HepG2 (cell line): ENCODE measurements at regions of chrX and their contacts with region 1.

Region 1: GRCh38 chrX:41236629-41237028 is 97.3 kb upstream of the DDX3X start:
- DNase-seq: no peak
- ATAC-seq: no peak
- H3K4me3 ChIP-seq: no peak overlapping the region
- H3K27ac ChIP-seq: no peak overlapping the region
- H3K4me1 ChIP-seq: peaks cover 20% of the 10 kb centered on the region
- H3K27me3 ChIP-seq: no peaks in the 10 kb centered on the region
- CTCF ChIP-seq: no peak
- EP300 ChIP-seq: no peak
- POLR2A ChIP-seq: no peak
- RAD21 ChIP-seq: no peak

Region 2: GRCh38 chrX:41180194-41180908 is 56.3 kb before region 1 on chrX:
- CTCF ChIA-PET with region 1: no interaction called
- POLR2A ChIA-PET with region 1: no interaction called
- in situ Hi-C with region 1: no loop called
- intact Hi-C with region 1: loop called (anchors 10 kb)
- DNase-seq: peak; percentile 39
- ATAC-seq: peak; percentile 57; the same call in 2 of the 3 replicates
- H3K4me3 ChIP-seq: no peak overlapping the region
- H3K27ac ChIP-seq: no peak overlapping the region
- H3K4me1 ChIP-seq: no peaks in the 10 kb centered on the region
- H3K27me3 ChIP-seq: no peaks in the 10 kb centered on the region
- CTCF ChIP-seq: peak; percentile 60
- EP300 ChIP-seq: no peak
- POLR2A ChIP-seq: no peak
- RAD21 ChIP-seq: no peak

Region 3: DNA sequence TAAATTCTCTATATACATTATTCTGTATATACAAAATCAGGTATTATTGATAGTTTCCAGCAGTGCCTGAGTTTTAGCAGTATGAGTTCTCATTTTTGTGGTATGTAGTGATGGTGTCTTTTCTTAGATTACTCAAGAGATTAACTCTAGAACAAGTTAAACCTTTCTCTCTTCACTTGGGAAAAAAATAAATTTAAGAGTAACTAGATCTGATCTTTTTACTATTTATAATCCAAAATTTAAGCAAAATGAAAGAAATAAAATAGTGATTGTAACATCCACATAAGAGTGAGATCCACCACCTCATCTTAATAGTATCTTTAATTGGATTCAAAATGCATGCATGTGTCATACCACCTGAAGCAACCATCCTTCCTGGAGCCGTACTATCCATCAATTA is 26.8 kb before region 1 on chrX:
- CTCF ChIA-PET with region 1: no interaction called
- POLR2A ChIA-PET with region 1: no interaction called
- in situ Hi-C with region 1: no loop called
- intact Hi-C with region 1: no loop called
- DNase-seq: no peak
- ATAC-seq: no peak
- H3K4me3 ChIP-seq: no peak overlapping the region
- H3K27ac ChIP-seq: no peak overlapping the region
- H3K4me1 ChIP-seq: no peaks in the 10 kb centered on the region
- H3K27me3 ChIP-seq: no peaks in the 10 kb centered on the region
- CTCF ChIP-seq: no peak
- EP300 ChIP-seq: no peak
- POLR2A ChIP-seq: no peak
- RAD21 ChIP-seq: no peak

Region 4: GRCh38 chrX:41288641-41289040 is 52.0 kb after region 1 on chrX:
- CTCF ChIA-PET with region 1: no interaction called
- POLR2A ChIA-PET with region 1: no interaction called
- in situ Hi-C with region 1: no loop called
- intact Hi-C with region 1: no loop called
- DNase-seq: no peak
- ATAC-seq: peak; percentile 87
- H3K4me3 ChIP-seq: no peak overlapping the region
- H3K27ac ChIP-seq: no peak overlapping the region
- H3K4me1 ChIP-seq: 0 out of 2 replicates have a peak, but pooled peaks cover 4% of the 10 kb centered on the region
- H3K27me3 ChIP-seq: no peaks in the 10 kb centered on the region
- CTCF ChIP-seq: no peak
- EP300 ChIP-seq: no peak
- POLR2A ChIP-seq: no peak
- RAD21 ChIP-seq: no peak

Region 5: GRCh38 chrX:41397768-41398167 is 161.1 kb after region 1 on chrX:
- CTCF ChIA-PET with region 1: no interaction called
- POLR2A ChIA-PET with region 1: no interaction called
- in situ Hi-C with region 1: no loop called
- intact Hi-C with region 1: no loop called
- DNase-seq: no peak
- ATAC-seq: no peak
- H3K4me3 ChIP-seq: no peak overlapping the region
- H3K27ac ChIP-seq: no peak overlapping the region
- H3K4me1 ChIP-seq: peaks cover 6% of the 10 kb centered on the region; the same call in 1 of the 2 replicates
- H3K27me3 ChIP-seq: no peaks in the 10 kb centered on the region
- CTCF ChIP-seq: no peak
- EP300 ChIP-seq: no peak
- POLR2A ChIP-seq: no peak
- RAD21 ChIP-seq: no peak

Region 6: DNA sequence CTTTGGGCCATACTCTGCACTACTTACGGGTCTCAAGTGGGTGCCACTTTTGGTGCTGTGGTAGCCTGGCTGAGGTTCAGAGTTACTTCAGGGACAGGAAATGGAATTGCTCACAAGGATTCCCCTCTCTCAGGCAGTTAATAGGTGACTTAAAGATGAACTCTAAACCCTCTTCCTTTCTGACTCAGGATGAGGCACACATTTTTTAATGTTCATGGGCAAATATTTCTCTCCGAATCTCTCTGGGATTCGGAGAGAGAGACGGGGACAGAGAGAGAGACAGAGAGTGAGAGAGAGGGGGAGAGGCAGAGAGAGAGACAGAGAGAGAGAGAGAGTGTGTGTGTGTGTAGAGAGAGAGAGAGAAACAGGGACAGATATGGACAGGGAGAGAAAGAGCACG is 290.3 kb after region 1 on chrX:
- CTCF ChIA-PET with region 1: no interaction called
- POLR2A ChIA-PET with region 1: no interaction called
- in situ Hi-C with region 1: no loop called
- intact Hi-C with region 1: no loop called
- DNase-seq: no peak
- ATAC-seq: no peak
- H3K4me3 ChIP-seq: no peak overlapping the region
- H3K27ac ChIP-seq: no peak overlapping the region
- H3K4me1 ChIP-seq: no peaks in the 10 kb centered on the region
- H3K27me3 ChIP-seq: no peaks in the 10 kb centered on the region
- CTCF ChIP-seq: no peak
- EP300 ChIP-seq: no peak
- POLR2A ChIP-seq: no peak
- RAD21 ChIP-seq: no peak